ENCODE measurements at regions of chr2 and their contacts with region 1.

Region 1: DNA sequence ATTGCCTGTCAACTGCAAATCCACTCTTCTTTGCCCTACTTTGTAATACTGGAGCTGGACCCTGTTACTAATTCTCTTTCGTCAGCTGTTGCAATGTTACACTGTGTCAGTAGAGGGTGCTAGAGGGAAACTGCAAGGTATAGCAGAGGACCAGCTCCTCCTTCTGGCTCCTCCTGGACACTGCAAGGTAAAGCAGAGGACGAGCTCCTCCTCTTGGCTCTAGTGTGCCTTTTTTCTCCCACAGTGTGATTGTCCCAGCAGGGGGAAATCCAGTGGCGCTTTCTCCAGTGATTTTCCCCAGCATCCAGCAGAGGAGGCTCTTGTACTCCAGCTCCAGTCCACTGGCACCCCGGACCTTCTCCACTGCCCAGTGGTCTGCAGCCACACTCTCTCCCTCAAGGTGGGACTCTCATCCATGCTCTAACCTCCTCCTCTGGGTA is 95.6 kb downstream of the CAPN13 start:
- DNase-seq: peak; percentile 90
- H3K4me3 Mint-ChIP-seq: no peak overlapping the region
- H3K27ac Mint-ChIP-seq: no peak overlapping the region
- H3K4me1 Mint-ChIP-seq: no peaks in the 10 kb centered on the region
- H3K27me3 Mint-ChIP-seq: no peaks in the 10 kb centered on the region
- CTCF ChIP-seq: peak; percentile 98

Region 2: GRCh38 chr2:30098266-30099005 is 613.2 kb before region 1 on chr2:
- CTCF ChIA-PET with region 1: no interaction called
- intact Hi-C with region 1: loop called (anchors 10 kb)
- DNase-seq: no peak
- H3K4me3 Mint-ChIP-seq: no peak overlapping the region
- H3K27ac Mint-ChIP-seq: no peak overlapping the region
- H3K4me1 Mint-ChIP-seq: no peaks in the 10 kb centered on the region
- H3K27me3 Mint-ChIP-seq: peaks cover 92% of the 10 kb centered on the region
- CTCF ChIP-seq: no peak

Region 3: GRCh38 chr2:30336978-30337841 is 374.5 kb before region 1 on chr2:
- CTCF ChIA-PET with region 1: interaction called, 3 read pairs
- intact Hi-C with region 1: loop called (anchors 5 kb)
- DNase-seq: no peak
- H3K4me3 Mint-ChIP-seq: no peak overlapping the region
- H3K27ac Mint-ChIP-seq: no peak overlapping the region
- H3K4me1 Mint-ChIP-seq: no peaks in the 10 kb centered on the region
- H3K27me3 Mint-ChIP-seq: peaks cover 24% of the 10 kb centered on the region
- CTCF ChIP-seq: no peak

Region 4: DNA sequence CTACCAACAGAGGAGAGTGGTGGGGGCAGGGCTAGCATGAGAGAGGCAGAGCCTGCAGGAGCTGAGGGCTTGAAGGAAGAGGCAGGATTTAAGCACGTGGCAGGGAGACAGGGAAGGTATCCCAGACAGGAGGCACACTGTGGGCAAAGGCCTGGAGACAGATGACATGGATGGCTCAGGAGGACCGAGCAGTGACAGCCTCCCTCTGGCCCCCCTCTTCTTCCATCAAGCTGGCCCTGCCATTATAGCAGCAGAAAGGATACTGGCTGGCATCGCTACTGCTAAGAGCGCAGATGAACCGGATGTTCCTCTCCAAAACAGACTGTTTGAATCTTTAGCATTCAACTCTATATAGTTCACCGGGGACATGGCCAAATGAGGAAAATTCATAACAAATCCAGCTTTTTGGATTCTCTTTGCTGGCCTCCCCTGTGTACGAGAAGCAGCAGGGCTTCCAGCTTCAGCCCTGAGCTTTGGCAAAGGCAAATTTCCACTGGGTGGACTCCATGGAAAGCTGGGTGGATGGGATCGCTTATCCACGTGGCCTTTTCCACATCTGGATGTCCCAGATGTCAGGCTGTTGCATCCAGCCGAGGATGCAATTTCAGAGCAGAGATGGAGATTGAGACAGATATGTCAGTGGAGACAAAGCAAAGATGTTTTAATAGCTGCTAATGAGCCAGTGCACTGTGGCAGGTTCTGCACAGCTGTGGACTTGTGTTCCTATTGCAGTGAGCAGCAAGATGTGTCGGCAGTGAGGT is 59.3 kb after region 1 on chr2:
- CTCF ChIA-PET with region 1: interaction called, 11 read pairs
- intact Hi-C with region 1: no loop called
- DNase-seq: no peak
- H3K4me3 Mint-ChIP-seq: no peak overlapping the region
- H3K27ac Mint-ChIP-seq: no peak overlapping the region
- H3K4me1 Mint-ChIP-seq: peaks cover 14% of the 10 kb centered on the region
- H3K27me3 Mint-ChIP-seq: no peaks in the 10 kb centered on the region
- CTCF ChIP-seq: no peak

Region 5: GRCh38 chr2:30781961-30782533 is 70.4 kb after region 1 on chr2:
- CTCF ChIA-PET with region 1: no interaction called
- intact Hi-C with region 1: no loop called
- DNase-seq: no peak
- H3K4me3 Mint-ChIP-seq: no peak overlapping the region
- H3K27ac Mint-ChIP-seq: no peak overlapping the region
- H3K4me1 Mint-ChIP-seq: no peaks in the 10 kb centered on the region
- H3K27me3 Mint-ChIP-seq: no peaks in the 10 kb centered on the region
- CTCF ChIP-seq: no peak

Region 6: GRCh38 chr2:30915486-30915885 is 203.8 kb after region 1 on chr2:
- CTCF ChIA-PET with region 1: no interaction called
- intact Hi-C with region 1: loop called (anchors 10 kb)
- DNase-seq: peak; percentile 66
- H3K4me3 Mint-ChIP-seq: no peak overlapping the region
- H3K27ac Mint-ChIP-seq: no peak overlapping the region
- H3K4me1 Mint-ChIP-seq: no peaks in the 10 kb centered on the region
- H3K27me3 Mint-ChIP-seq: no peaks in the 10 kb centered on the region
- CTCF ChIP-seq: peak; percentile 37

Region 7: GRCh38 chr2:31428001-31428418 is 716.3 kb after region 1 on chr2:
- CTCF ChIA-PET with region 1: no interaction called
- intact Hi-C with region 1: loop called (anchors 5 kb)
- DNase-seq: peak; percentile 72
- H3K4me3 Mint-ChIP-seq: no peak overlapping the region
- H3K27ac Mint-ChIP-seq: peak overlapping the region; percentile 71
- H3K4me1 Mint-ChIP-seq: peaks cover 47% of the 10 kb centered on the region
- H3K27me3 Mint-ChIP-seq: no peaks in the 10 kb centered on the region
- CTCF ChIP-seq: peak; percentile 32

Measured in Calu3 (cell line).